Activated CD4-positive, alpha-beta T cell treated with anti-CD3 and anti-CD28 coated beads for 36 hours (primary cell): ENCODE measurements at regions of chr5 and their contacts with region 1.

Region 1: GRCh38 chr5:139844472-139845145 is 49.0 kb downstream of the PSD2 start:
- DNase-seq: peak; percentile 88
- ATAC-seq: peak; percentile 47
- H3K4me3 Mint-ChIP-seq: no peak overlapping the region
- H3K27ac Mint-ChIP-seq: no peak overlapping the region
- H3K4me1 Mint-ChIP-seq: peaks cover 7% of the 10 kb centered on the region
- H3K27me3 Mint-ChIP-seq: peaks cover 24% of the 10 kb centered on the region

Region 2: GRCh38 chr5:139651853-139652787 is 192.5 kb before region 1 on chr5:
- CTCF ChIA-PET with region 1: no interaction called
- POLR2A ChIA-PET with region 1: no interaction called
- intact Hi-C with region 1: loop called in 1 of 2 experiments (anchors 5 kb)
- DNase-seq: peak; percentile 82
- ATAC-seq: peak; percentile 64
- H3K4me3 Mint-ChIP-seq: no peak overlapping the region
- H3K27ac Mint-ChIP-seq: no peak overlapping the region
- H3K4me1 Mint-ChIP-seq: peaks cover 34% of the 10 kb centered on the region
- H3K27me3 Mint-ChIP-seq: peaks cover 40% of the 10 kb centered on the region

Region 3: DNA sequence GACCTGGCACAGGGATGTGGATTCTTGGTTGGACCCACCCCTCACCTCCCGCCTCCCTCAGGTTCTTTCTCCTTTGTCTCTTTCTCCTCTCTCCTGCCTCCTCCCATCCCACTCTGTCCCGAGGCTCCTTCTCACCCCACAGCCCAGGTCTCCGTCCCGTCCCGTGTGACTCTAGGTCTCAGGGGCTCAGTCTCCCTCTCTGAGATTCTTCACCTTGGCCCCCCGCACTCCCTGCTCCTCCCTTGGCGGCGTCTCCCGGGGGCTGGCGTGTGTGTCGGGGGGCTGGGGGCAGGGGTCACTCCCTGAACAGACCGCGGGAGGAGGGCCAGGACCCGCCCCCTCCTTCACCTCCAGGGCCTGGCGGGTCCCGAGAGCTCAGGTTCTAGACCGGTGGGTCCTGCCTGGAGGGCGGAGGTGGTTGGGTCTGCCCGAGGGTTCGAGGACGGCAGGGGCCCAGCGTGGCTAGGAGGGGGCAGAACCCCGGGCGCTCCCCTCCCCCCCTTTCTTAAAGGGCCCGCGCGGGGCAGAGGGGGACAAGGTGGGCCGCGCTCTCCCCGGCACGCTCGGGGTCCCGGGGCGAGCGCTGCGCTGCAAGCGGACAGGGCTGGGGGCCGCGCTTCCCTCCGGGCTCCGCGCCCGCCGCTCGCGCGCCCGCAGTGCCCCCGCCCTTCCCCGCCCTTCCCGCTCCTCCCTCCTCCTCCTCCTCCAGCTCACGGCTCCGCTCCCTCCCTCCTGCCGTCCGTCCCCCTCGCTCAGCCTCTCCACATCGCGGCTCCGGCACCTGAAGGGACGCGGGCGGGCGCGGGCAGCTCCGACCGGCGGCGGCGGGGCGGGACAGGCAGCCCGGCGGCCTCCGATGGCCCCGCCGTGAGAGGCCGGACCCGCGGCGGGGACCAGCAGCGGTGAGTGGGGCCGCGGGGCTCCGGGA is 49.3 kb before region 1 on chr5 and contains the start of gene PSD2:
- CTCF ChIA-PET with region 1: interaction called, 10 read pairs
- POLR2A ChIA-PET with region 1: no interaction called
- intact Hi-C with region 1: loop called in 1 of 2 experiments (anchors 2 kb)
- DNase-seq: peak; percentile 44
- ATAC-seq: peak; percentile 56
- H3K4me3 Mint-ChIP-seq: no peak within 1 kb of the TSS
- H3K27ac Mint-ChIP-seq: no peak within 1 kb of the TSS
- H3K4me1 Mint-ChIP-seq: peaks cover 2% of the 10 kb centered on the region
- H3K27me3 Mint-ChIP-seq: peaks cover 52% of the 10 kb centered on the region
- total RNA-seq, gene PSD2: not detected